PC-3 (cell line): ENCODE measurements at regions of chr18 and their contacts with region 1.

Region 1: DNA sequence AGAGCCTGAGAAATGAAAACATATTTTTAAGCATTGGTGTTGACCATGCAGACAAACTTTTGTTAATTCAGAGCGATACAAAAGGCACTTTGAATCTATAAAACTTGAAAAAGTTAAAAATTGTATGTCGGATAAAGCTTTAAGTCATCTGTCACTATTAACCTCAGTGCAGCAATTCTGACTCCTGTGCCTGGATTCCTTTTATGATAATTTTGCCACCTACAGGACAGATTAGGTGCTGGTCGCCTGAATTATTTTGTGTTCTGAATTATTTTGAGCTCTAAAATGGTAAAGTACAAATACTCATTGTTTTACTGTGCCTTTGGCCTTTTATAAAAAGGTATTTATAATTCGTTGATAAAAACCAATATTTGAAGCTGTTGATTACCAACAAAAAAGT is 19.4 kb upstream of the RNF138 start:
- DNase-seq: peak; percentile 5
- ATAC-seq: no peak
- H3K4me3 ChIP-seq: no peak overlapping the region
- H3K27ac ChIP-seq: no peak overlapping the region
- H3K4me1 ChIP-seq: no peaks in the 10 kb centered on the region
- H3K27me3 ChIP-seq: no peaks in the 10 kb centered on the region
- CTCF ChIP-seq: peak; percentile 41; the same call in 1 of the 2 replicates

Region 2: GRCh38 chr18:31942999-31943865 is 129.1 kb before region 1 on chr18 and contains the start of gene TRAPPC8:
- CTCF ChIA-PET with region 1: interaction called, 9 read pairs
- POLR2A ChIA-PET with region 1: interaction called, 15 read pairs
- intact Hi-C with region 1: loop called (anchors 5 kb)
- DNase-seq: peak; percentile 80
- ATAC-seq: peak; percentile 85
- H3K4me3 ChIP-seq: peak within 1 kb of the TSS; percentile 87
- H3K27ac ChIP-seq: peak within 1 kb of the TSS; percentile 64
- H3K4me1 ChIP-seq: 0 out of 2 replicates have a peak, but pooled peaks cover 6% of the 10 kb centered on the region
- H3K27me3 ChIP-seq: no peaks in the 10 kb centered on the region
- CTCF ChIP-seq: no peak
- total RNA-seq, gene TRAPPC8: 10.2 and 14.7 TPM in 2 replicates

Region 3: GRCh38 chr18:32018331-32019250 is 53.7 kb before region 1 on chr18 and contains the start of gene RNF125:
- CTCF ChIA-PET with region 1: interaction called, 4 read pairs
- POLR2A ChIA-PET with region 1: no interaction called
- intact Hi-C with region 1: loop called (anchors 5 kb)
- DNase-seq: peak; percentile 60
- ATAC-seq: peak; percentile 90
- H3K4me3 ChIP-seq: peak within 1 kb of the TSS; percentile 69
- H3K27ac ChIP-seq: no peak within 1 kb of the TSS
- H3K4me1 ChIP-seq: no peaks in the 10 kb centered on the region
- H3K27me3 ChIP-seq: no peaks in the 10 kb centered on the region
- CTCF ChIP-seq: no peak
- total RNA-seq, gene RNF125: 1.1 and 1.2 TPM in 2 replicates

Region 4: DNA sequence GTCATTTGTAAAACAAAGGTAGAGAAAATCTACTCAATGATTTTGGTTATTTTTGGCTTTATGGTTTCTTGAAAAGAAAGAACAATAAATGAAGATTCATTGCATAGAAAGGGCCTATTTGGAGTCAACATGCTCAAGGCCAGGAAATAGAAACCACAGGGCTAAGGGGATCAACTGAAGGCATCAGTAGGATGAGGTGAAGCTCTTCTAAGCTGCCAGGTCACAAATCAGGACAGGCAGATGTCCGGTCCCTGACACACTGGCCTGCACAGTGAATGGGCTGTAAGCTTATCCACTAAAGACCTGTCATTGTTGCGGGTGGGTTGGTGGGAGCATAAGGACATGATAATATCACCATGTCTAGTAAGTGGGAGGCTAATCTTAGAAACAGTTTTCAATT is 12.3 kb before region 1 on chr18:
- CTCF ChIA-PET with region 1: interaction called, 12 read pairs
- POLR2A ChIA-PET with region 1: no interaction called
- intact Hi-C with region 1: no loop called
- DNase-seq: no peak
- ATAC-seq: no peak
- H3K4me3 ChIP-seq: no peak overlapping the region
- H3K27ac ChIP-seq: no peak overlapping the region
- H3K4me1 ChIP-seq: no peaks in the 10 kb centered on the region
- H3K27me3 ChIP-seq: no peaks in the 10 kb centered on the region
- CTCF ChIP-seq: no peak